ENCODE measurements at regions of chr11 and their contacts with region 1.

Region 1: DNA sequence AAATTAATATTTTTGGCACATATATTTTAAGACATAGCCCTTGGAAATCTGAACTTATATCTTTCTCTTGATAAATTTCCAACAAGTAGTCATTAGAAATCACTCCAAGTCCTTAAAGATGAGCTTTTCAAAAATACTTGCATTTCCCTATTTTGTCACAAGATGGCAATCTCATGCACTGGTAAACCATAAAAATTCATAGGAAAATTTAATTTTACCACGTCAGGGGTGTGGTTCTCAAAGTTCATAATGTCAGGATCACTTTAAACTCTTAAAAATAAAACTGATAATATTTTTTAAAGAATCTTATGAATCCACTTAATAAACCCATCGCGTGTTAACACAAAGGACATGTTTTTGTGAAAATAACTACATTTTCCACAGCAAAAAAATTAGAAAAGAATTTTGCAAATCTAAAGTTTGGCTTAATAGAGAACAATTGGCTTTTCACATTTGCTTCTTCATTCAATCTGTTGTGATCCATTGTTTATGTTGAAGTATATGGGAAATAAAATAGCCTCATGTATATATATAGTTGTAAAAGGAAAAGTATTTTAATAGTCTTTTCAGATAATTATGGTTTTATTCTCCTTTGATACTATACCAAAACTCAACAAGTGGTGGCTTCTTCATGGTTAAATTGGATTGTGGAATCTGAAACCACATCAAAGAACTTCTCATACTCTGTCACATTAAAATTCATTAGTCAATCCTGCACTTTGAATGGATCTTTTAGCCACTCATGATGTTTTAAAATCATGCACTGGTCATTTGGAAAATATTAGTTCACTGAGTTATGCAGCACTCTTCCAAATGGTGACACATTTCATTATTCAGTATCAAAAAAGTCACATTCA is 169.1 kb downstream of the CADM1 start:
- DNase-seq: no peak

Region 2: GRCh38 chr11:115391598-115391997 is 56.4 kb after region 1 on chr11:
- intact Hi-C with region 1: no loop called
- DNase-seq: no peak

Region 3: GRCh38 chr11:115409691-115410220 is 74.6 kb after region 1 on chr11:
- intact Hi-C with region 1: no loop called
- DNase-seq: no peak

Region 4: DNA sequence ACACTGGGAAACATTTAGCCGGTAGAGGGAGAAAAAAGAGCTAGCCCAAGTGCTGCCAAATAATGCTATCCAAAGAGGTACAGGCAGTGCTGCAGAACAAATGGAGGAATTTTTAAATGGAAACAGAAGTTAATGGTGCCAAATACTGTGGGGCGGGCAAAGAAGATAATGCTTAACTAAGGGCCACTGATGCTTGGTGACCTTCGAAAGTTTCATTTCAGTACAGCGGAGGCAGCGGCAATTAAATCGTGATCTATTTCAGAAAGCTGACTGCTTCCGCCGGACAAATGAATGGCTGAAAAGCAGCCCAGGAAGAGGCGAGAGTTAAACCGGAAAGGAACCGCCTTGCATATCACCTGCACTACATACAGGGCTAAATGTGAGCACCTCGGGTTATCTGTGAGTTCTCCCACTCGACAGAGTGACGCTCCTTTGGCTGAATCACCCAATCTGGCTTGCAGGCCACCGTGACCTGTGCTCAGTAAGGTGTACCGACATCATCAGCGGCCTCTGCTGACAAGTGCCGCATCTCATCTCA is 126.9 kb after region 1 on chr11:
- intact Hi-C with region 1: loop called (anchors 10 kb)
- DNase-seq: no peak

Region 5: GRCh38 chr11:115488945-115489344 is 153.8 kb after region 1 on chr11:
- intact Hi-C with region 1: no loop called
- DNase-seq: no peak

Region 6: GRCh38 chr11:115504276-115505158 is 169.4 kb after region 1 on chr11 and contains the start of gene CADM1:
- intact Hi-C with region 1: loop called (anchors 2 kb)
- DNase-seq: peak; percentile 95
- total RNA-seq, gene CADM1: 36.0 TPM

Region 7: DNA sequence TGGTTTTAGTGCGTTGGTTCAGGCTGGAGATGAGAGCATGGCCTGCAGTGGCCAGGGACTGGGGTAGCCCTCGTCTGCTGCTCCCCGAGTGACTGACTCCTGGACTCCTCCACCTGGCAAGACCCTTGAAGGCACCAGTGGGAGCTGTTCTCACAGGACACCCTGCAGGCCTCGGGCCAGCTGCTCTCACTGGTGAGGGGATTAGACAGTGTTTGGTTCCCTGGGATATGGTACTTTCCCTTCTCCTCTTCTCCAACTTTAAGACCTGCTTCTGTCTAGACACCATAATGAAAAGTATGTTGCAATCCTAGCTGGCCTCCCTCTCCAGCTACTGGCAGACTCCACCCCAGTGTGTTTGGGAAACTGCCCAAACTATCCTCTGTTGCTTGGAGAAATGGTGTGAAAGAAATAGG is 337.8 kb after region 1 on chr11:
- intact Hi-C with region 1: loop called (anchors 10 kb)
- DNase-seq: no peak

Region 8: DNA sequence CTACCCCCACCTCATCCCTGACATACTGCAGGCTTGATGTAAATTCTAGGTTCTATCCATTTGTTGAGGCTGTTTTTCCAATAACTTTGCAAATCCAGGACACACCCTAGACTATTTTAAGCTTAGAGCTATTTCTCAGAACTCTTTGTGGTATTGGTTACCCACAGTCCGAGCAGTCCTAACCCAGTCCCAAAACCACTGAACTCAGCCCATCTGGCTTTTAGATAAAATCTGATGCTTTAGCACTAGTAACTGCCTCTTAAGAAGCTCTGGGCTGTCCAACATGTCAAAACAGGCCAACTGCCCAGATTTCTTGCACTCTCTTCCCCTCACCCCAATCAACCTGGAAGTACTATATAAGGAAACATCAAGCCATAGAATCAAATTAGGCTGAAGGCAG is 513.5 kb after region 1 on chr11:
- intact Hi-C with region 1: loop called (anchors 10 kb)
- DNase-seq: no peak

Measured in cardiac septum (tissue), 1 donor.